GM12878 (cell line): ENCODE measurements at regions of chr22 and their contacts with region 1.

Region 1: GRCh38 chr22:42662114-42663021 is 13.2 kb upstream of the CYB5R3 start:
- DNase-seq: no peak
- ATAC-seq: peak; percentile 74
- H3K4me3 ChIP-seq: peak overlapping the region; percentile 62; the same call in 1 of the 2 replicates
- H3K27ac ChIP-seq: peak overlapping the region; percentile 61
- H3K4me1 ChIP-seq: peaks cover 33% of the 10 kb centered on the region
- H3K27me3 ChIP-seq: no peaks in the 10 kb centered on the region
- CTCF ChIP-seq: peak; percentile 78 to 90 (median 85)
- EP300 ChIP-seq: no peak
- POLR2A ChIP-seq: peak; percentile 58
- RAD21 ChIP-seq: peak; percentile 66

Region 2: GRCh38 chr22:42520663-42521546 is 141.5 kb before region 1 on chr22:
- CTCF ChIA-PET with region 1: no interaction called
- POLR2A ChIA-PET with region 1: no interaction called
- RAD21 ChIA-PET with region 1: no interaction called
- SMC1A ChIA-PET with region 1: no interaction called
- in situ Hi-C with region 1: no loop called
- intact Hi-C with region 1: no loop called
- DNase-seq: no peak
- ATAC-seq: no peak
- H3K4me3 ChIP-seq: no peak overlapping the region
- H3K27ac ChIP-seq: no peak overlapping the region
- H3K4me1 ChIP-seq: peaks cover 4% of the 10 kb centered on the region
- H3K27me3 ChIP-seq: no peaks in the 10 kb centered on the region
- CTCF ChIP-seq: no peak
- EP300 ChIP-seq: no peak
- POLR2A ChIP-seq: no peak
- RAD21 ChIP-seq: no peak

Region 3: DNA sequence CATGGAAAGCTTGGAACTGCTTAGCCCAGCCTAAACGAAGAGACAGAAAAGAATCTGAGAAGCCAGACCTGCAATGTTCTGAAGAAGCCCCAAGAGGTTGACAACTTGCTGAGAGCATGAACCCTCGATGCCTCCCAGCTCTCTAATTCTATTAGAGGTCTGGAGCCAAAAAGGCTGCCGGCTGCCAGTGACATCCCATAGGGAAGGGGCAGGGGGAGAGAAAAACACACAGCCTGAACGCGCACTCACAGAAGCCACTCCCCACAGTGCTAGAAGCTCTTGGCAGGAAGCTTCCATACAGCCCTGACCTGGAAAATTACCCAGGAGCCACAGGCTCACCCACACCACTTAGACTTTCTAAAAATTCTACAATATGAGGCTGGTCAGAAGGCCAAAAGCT is 66.0 kb before region 1 on chr22:
- CTCF ChIA-PET with region 1: no interaction called
- POLR2A ChIA-PET with region 1: no interaction called
- RAD21 ChIA-PET with region 1: no interaction called
- SMC1A ChIA-PET with region 1: no interaction called
- in situ Hi-C with region 1: no loop called
- intact Hi-C with region 1: no loop called
- DNase-seq: no peak
- ATAC-seq: no peak
- H3K4me3 ChIP-seq: no peak overlapping the region
- H3K27ac ChIP-seq: no peak overlapping the region
- H3K4me1 ChIP-seq: no peaks in the 10 kb centered on the region
- H3K27me3 ChIP-seq: no peaks in the 10 kb centered on the region
- CTCF ChIP-seq: no peak
- EP300 ChIP-seq: no peak
- POLR2A ChIP-seq: no peak
- RAD21 ChIP-seq: no peak

Region 4: DNA sequence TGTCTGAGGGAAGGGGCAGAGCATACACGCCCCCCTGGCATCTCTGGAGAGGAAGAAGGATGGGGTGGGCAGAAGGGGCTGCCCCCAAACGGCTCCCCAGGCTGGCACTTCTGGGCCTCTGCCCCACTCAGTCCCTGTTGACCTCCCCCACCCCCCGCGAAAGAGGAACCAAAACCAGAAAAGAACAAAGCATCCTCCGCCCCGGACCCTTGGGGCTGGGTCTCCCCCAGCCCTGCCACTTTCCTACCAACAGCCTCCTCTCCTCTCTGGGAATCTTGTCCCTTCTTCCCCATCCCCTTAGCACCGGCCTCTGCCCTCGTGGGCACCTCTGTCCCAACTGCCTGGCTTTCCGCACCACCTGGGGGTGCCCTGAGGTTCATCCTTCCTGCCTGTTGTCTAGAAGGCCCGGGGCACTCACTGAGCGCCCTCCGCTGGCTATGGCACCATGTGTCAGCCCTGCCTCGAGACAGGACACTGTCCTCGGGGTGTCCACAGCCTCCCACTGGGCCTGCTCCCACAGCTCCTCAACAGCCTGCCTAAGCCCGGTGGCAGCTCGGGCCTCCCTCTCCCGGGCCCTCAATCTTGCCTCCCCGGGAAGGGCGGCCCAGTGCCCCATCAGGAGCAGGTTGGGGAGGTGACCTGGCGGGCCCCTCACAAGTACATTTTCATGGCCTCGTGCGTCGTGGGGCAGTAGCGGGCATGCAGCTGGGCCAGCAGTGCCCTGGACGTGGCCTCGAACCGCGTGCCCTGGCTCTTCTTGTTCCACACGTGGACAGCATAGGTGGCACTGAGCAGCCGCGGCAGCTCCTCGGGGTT is 30.1 kb after region 1 on chr22:
- CTCF ChIA-PET with region 1: interaction called, 3 read pairs
- POLR2A ChIA-PET with region 1: interaction called, 4 read pairs
- RAD21 ChIA-PET with region 1: no interaction called
- SMC1A ChIA-PET with region 1: interaction called, 4 read pairs
- in situ Hi-C with region 1: no loop called
- intact Hi-C with region 1: loop called (anchors 1 kb)
- DNase-seq: no peak
- ATAC-seq: peak; percentile 94
- H3K4me3 ChIP-seq: no peak overlapping the region; the same call in 1 of the 2 replicates
- H3K27ac ChIP-seq: peak overlapping the region; percentile 78
- H3K4me1 ChIP-seq: peaks cover 16% of the 10 kb centered on the region
- H3K27me3 ChIP-seq: no peaks in the 10 kb centered on the region
- CTCF ChIP-seq: peak; percentile 38 to 48 (median 41); a peak in 5 of 6 replicates
- EP300 ChIP-seq: no peak
- POLR2A ChIP-seq: no peak
- RAD21 ChIP-seq: peak; percentile 37

Region 5: GRCh38 chr22:42769574-42770447 is 107.4 kb after region 1 on chr22:
- CTCF ChIA-PET with region 1: interaction called, 4 read pairs
- POLR2A ChIA-PET with region 1: interaction called, 3 read pairs
- RAD21 ChIA-PET with region 1: interaction called, 12 read pairs
- SMC1A ChIA-PET with region 1: interaction called, 4 read pairs
- in situ Hi-C with region 1: no loop called
- intact Hi-C with region 1: loop called (anchors 5 kb)
- DNase-seq: peak; percentile 44
- ATAC-seq: peak; percentile 92
- H3K4me3 ChIP-seq: peak overlapping the region; percentile 28; the same call in 1 of the 2 replicates
- H3K27ac ChIP-seq: peak overlapping the region; percentile 70
- H3K4me1 ChIP-seq: peaks cover 43% of the 10 kb centered on the region
- H3K27me3 ChIP-seq: no peaks in the 10 kb centered on the region; a peak in 1 of 4 replicates
- CTCF ChIP-seq: no peak
- EP300 ChIP-seq: peak; percentile 75 to 82
- POLR2A ChIP-seq: 0 out of 2 replicates have a peak, but pooled peaks have one; percentile 23
- RAD21 ChIP-seq: no peak

Region 6: GRCh38 chr22:42820066-42820763 is 157.8 kb after region 1 on chr22:
- CTCF ChIA-PET with region 1: interaction called, 15 read pairs
- POLR2A ChIA-PET with region 1: interaction called, 3 read pairs
- RAD21 ChIA-PET with region 1: interaction called, 7 read pairs
- SMC1A ChIA-PET with region 1: interaction called, 9 read pairs
- in situ Hi-C with region 1: no loop called
- intact Hi-C with region 1: no loop called
- DNase-seq: no peak
- ATAC-seq: no peak
- H3K4me3 ChIP-seq: no peak overlapping the region
- H3K27ac ChIP-seq: no peak overlapping the region
- H3K4me1 ChIP-seq: no peaks in the 10 kb centered on the region
- H3K27me3 ChIP-seq: no peaks in the 10 kb centered on the region
- CTCF ChIP-seq: peak in 2 of 3 experiments; percentile 46 to 49; a peak in 3 of 6 replicates
- EP300 ChIP-seq: no peak
- POLR2A ChIP-seq: no peak
- RAD21 ChIP-seq: peak; percentile 56

Region 7: GRCh38 chr22:43088979-43089717 is 426.8 kb after region 1 on chr22 and contains the start of gene TTLL1:
- CTCF ChIA-PET with region 1: interaction called, 3 read pairs
- POLR2A ChIA-PET with region 1: no interaction called
- RAD21 ChIA-PET with region 1: no interaction called
- SMC1A ChIA-PET with region 1: no interaction called
- in situ Hi-C with region 1: no loop called
- intact Hi-C with region 1: loop called (anchors 5 kb)
- DNase-seq: peak; percentile 27
- ATAC-seq: peak; percentile 96
- H3K4me3 ChIP-seq: peak within 1 kb of the TSS; percentile 74
- H3K27ac ChIP-seq: peak within 1 kb of the TSS; percentile 27; the same call in 1 of the 2 replicates
- H3K4me1 ChIP-seq: peaks cover 15% of the 10 kb centered on the region
- H3K27me3 ChIP-seq: no peaks in the 10 kb centered on the region
- CTCF ChIP-seq: no peak
- EP300 ChIP-seq: no peak
- POLR2A ChIP-seq: peak; percentile 84
- RAD21 ChIP-seq: no peak
- polyA plus RNA-seq, gene TTLL1: 0.39 to 0.80 TPM